Mucosa of descending colon (tissue), 3 donors: ENCODE measurements at regions of chr9 and their contacts with region 1.

Region 1: DNA sequence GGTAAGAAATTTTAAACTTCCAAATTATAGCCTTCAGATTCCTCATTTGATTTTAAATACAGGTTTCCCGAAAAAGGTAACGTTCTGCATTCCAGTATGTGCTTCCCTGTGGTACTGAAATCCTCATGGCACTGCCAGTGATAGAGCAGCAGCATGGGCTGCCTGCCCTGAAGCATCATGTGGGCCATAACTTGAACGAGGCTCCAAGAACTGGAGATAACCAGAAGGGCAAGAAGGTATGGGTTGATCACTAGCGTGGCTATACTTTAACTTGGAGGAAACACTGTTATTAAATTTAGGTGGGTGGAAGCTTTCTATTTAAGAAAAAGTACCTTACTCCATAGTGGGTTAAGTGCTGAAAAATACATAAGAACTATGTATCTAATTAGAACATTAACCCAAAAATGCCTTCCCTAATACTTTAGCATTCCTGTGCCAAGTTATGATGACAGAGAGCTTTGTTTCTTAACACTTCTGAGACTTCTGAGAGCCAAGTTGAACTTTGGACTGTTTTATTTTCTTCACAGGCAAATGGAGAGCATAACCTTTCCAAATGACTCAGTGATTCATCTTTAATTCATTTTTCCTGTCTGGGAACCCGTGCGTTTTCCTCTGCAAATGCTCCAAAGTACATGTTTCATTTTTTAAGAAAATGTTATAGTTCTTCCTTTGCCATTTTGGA is 191.5 kb upstream of the GNA14 start:
- DNase-seq: no peak
- ATAC-seq: peak; percentile 79
- H3K4me3 ChIP-seq: no peak overlapping the region
- H3K4me1 ChIP-seq: peaks cover 32% of the 10 kb centered on the region
- CTCF ChIP-seq: no peak

Region 2: GRCh38 chr9:77884395-77884851 is 44.8 kb after region 1 on chr9:
- intact Hi-C with region 1: loop called in 1 of 2 experiments (anchors 10 kb)
- DNase-seq: no peak
- ATAC-seq: no peak
- H3K4me3 ChIP-seq: no peak overlapping the region
- H3K4me1 ChIP-seq: peaks cover 23% of the 10 kb centered on the region
- CTCF ChIP-seq: no peak